Head of caudate nucleus (tissue), 42 donors: ENCODE measurements at regions of chr22 and their contacts with region 1.

Region 1: DNA sequence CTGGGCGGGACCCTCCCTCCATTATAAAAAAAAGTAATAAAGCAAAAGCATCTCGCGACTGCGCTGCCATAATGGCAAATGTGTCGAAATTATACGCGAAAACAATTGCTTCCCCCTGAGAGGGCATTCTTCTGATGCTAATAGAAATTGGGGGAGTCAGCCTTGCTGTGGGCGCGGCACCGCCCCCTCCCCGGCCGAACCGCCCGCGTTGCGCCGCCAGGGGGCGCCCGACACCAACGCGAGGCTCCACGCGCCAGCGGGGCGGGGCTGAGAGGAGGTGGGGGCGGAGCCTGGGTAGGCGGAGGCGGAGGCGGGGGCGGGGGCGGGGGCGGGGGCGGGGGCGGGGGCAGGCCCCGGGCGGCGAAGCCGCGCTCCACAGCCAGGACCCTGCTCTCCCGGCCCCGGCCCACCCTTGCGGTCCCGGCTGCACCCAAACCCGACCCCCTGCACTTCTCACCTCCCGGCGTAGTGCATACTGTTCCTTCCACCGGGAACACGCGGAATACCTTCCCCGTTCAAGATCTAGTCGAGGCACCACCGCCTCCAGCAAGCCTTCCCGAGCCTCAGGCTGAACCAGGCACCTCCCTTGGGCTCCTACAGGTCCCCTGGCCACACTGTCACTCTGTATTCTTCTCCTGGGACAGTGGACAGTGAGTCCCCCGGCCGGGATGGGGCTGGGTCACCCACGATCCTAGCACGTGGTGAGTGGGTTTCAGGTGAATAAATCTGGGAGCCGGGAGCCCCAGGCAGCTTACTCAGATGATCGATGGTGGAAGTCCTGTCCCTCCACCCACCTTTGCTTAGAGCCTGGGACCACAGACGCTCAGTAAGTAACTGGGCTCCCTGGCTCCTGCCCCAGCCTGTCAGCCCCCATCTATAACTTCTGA is 15.5 kb upstream of the UPK3A start:
- DNase-seq: peak; percentile 52 to 95 (median 87)

Region 2: GRCh38 chr22:45309472-45310227 is 40.4 kb after region 1 on chr22 and contains the start of gene FAM118A:
- intact Hi-C with region 1: loop called (anchors 5 kb)
- DNase-seq: peak; percentile 81 to 99 (median 96)

Region 3: DNA sequence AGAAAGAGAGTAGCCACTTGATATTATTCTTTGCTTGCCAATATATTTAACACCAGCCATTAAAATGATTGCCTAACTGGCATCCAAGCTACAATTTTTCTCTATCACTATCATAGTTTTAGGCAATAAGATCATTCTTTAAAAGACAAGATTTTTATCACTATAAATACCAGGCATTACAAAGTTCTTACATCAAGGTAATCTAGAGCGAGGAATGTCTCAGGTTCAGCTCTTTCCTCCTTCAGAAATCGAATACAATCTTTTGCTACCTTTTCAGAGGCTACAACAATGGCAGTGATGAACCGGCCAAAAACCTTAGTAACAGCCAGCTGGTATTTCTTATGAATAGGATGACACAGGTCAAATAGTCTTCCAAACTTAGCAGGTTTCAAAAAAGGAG is 120.3 kb after region 1 on chr22:
- intact Hi-C with region 1: no loop called
- DNase-seq: no peak

Region 4: DNA sequence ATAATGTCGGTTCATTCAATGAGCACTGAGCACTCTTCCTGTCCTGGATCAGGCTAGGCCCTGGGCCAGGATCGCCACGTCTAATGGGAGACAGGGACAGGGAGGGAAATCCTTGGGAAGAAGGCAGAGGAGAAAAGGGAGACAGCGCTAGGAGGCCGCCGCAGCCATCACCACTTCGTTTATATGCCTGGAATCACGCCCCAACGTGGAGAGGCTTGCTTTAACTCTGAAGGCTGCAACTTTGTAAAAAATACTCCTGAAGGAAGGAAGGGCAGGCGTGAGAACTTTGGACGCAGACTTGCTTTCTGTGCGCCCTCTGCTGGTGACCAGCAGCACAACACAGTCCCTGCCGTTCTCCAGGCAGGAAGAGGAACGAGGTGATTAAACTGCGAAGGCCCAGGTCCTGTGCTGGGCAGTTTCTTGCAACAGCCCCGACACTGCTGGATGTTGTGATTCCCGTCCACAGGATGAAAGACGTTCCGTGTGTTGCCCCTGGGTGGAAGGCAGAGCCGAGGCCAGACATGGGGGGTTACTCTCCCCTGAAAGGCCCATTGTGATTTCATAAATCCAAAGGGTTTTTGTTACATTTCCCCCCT is 166.4 kb after region 1 on chr22:
- intact Hi-C with region 1: loop called (anchors 1 kb)
- DNase-seq: peak; percentile 55 to 95 (median 87)

Region 5: DNA sequence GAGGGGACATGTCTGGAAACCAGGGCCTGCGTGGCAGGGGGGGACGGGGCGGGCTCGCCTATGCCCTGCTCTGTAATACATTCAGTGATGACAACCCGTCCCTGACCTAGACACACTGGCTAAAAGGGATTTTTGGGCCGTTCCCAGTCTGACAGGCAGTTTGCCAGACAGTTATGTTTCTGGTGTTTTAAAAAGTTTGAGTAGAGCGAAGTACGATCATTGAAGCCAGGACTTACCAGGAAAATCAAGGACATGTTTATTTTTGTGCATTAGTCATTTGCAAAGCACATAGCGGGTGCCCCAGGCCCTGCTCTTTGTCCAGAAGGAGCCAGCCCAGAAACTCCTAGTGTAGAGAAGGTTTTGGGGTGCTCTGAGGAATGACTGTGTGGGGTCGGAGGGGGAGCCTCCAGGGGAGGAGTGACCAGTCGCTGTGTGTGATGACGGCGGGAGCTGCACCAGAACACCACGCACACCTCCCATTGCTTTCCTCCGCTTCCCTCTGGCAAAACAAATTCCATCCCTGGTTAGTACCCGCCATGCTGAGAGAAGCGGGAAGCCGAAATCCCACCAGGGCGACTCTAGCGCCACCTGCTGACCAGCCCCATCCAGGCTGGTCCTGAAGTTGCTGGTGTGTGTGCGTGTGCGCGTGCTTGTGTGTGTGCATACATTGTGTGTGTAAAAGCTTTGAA is 284.3 kb after region 1 on chr22:
- intact Hi-C with region 1: loop called (anchors 5 kb)
- DNase-seq: peak; percentile 51 to 92 (median 82)